ACHN (cell line): ENCODE measurements at regions of chr15 and their contacts with region 1.

Region 1: DNA sequence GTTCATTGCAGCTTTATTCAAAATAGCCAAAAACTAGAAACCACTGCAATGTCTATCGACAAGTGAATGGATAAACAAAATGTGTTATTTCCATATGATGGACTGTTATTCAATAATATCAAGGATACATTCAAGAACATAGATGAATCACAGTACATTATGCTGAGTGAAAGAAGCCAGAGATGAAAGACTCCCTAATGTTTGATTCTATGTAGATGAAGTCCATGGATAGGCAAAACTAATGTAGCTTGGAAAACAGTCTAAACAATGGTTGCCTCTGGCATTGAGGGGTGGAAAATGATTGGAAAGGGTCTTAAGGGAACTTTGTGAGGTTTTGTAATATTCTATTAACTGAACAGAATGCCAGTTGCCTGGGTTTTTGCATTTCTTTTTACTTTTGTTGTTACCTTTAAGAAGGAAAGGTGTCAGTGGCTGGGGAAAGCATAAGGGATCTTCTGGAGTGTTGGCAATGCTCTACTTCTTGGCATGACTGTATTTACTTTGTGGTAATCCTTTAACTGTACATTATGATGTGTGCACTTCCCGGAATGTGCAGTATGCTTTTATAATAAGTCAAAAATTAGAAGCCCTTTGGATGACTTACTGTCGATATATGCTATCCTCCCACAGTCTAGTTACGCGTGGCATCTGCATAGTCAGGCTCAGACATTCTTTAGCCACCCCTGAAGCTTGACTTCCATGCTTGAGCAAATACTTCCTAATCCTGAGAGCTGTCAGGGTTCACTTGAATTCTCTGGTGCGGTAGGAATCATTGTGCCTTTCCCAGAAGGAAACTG is 20.5 kb upstream of the ATP10A start:
- DNase-seq: peak; percentile 97

Region 2: GRCh38 chr15:25764980-25765735 is 118.5 kb before region 1 on chr15:
- in situ Hi-C with region 1: no loop called
- DNase-seq: no peak

Region 3: GRCh38 chr15:25775317-25775912 is 108.2 kb before region 1 on chr15:
- in situ Hi-C with region 1: loop called (anchors 25 kb)
- DNase-seq: peak; percentile 38